ENCODE measurements at regions of chr1 and their contacts with region 1.

Region 1: GRCh38 chr1:44631647-44632539 is 42.4 kb downstream of the TMEM53 start:
- DNase-seq: peak; percentile 86 to 92 (median 88)
- H3K4me3 ChIP-seq: peak overlapping the region; percentile 38 to 65
- H3K4me3 Mint-ChIP-seq: peak overlapping the region; percentile 91 to 97 (median 93)
- H3K27ac ChIP-seq: peak overlapping the region; percentile 85
- H3K27ac Mint-ChIP-seq: peak overlapping the region; percentile 96 to 99 (median 97)
- H3K4me1 ChIP-seq: peaks cover 35% of the 10 kb centered on the region
- H3K4me1 Mint-ChIP-seq: peaks cover 27 to 50% (median 33%) of the 10 kb centered on the region in 4 donors
- H3K27me3 ChIP-seq: no peaks in the 10 kb centered on the region
- H3K27me3 Mint-ChIP-seq: no peaks in the 10 kb centered on the region

Region 2: GRCh38 chr1:44645476-44646244 is 13.8 kb after region 1 on chr1:
- CTCF ChIA-PET with region 1: interaction called, 4 read pairs
- POLR2A ChIA-PET with region 1: interaction called, 37 read pairs
- intact Hi-C with region 1: no loop called
- DNase-seq: no peak
- H3K4me3 ChIP-seq: no peak overlapping the region
- H3K4me3 Mint-ChIP-seq: no peak overlapping the region
- H3K27ac ChIP-seq: no peak overlapping the region
- H3K27ac Mint-ChIP-seq: no peak overlapping the region
- H3K4me1 ChIP-seq: no peaks in the 10 kb centered on the region
- H3K4me1 Mint-ChIP-seq: peaks cover 0 to 5% (median 1%) of the 10 kb centered on the region in 4 donors
- H3K27me3 ChIP-seq: no peaks in the 10 kb centered on the region
- H3K27me3 Mint-ChIP-seq: no peaks in the 10 kb centered on the region

Region 3: DNA sequence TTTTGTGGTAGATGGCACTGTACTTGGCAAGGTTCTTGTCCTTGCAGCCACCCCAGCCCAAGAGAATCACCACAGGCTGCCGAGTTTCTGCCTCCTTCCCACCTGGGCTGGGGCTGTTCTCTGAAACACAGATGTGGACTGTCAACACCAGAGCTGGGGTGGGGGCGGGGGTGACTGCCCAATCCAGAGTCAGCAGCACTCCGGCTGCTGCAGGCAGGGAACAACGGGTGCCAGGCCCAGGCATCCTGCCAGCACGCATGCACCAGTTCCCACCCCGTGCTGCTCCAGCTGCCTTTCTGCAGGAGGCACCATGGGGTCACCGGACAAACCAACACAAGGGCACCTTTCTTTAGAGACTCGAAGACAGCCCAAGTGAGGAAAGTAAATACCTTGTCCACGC is 28.3 kb after region 1 on chr1:
- CTCF ChIA-PET with region 1: no interaction called
- POLR2A ChIA-PET with region 1: interaction called, 12 read pairs
- intact Hi-C with region 1: no loop called
- DNase-seq: no peak
- H3K4me3 ChIP-seq: no peak overlapping the region
- H3K4me3 Mint-ChIP-seq: no peak overlapping the region
- H3K27ac ChIP-seq: no peak overlapping the region
- H3K27ac Mint-ChIP-seq: no peak overlapping the region
- H3K4me1 ChIP-seq: peaks cover 10% of the 10 kb centered on the region
- H3K4me1 Mint-ChIP-seq: peaks cover 12 to 15% (median 14%) of the 10 kb centered on the region in 4 donors
- H3K27me3 ChIP-seq: no peaks in the 10 kb centered on the region
- H3K27me3 Mint-ChIP-seq: no peaks in the 10 kb centered on the region

Measured in CD4-positive, alpha-beta memory T cell (primary cell).